ENCODE measurements at regions of chr2 and their contacts with region 1.

Region 1: GRCh38 chr2:206154197-206154596 is 5.0 kb downstream of the NDUFS1 start:
- H3K4me3 Mint-ChIP-seq: no peak overlapping the region
- H3K27ac Mint-ChIP-seq: no peak overlapping the region
- H3K4me1 Mint-ChIP-seq: peaks cover 38% of the 10 kb centered on the region
- H3K27me3 Mint-ChIP-seq: no peaks in the 10 kb centered on the region

Region 2: GRCh38 chr2:206023183-206023582 is 131.0 kb before region 1 on chr2:
- intact Hi-C with region 1: loop called (anchors 5 kb)
- H3K4me3 Mint-ChIP-seq: no peak overlapping the region
- H3K27ac Mint-ChIP-seq: no peak overlapping the region
- H3K4me1 Mint-ChIP-seq: no peaks in the 10 kb centered on the region
- H3K27me3 Mint-ChIP-seq: no peaks in the 10 kb centered on the region

Region 3: GRCh38 chr2:206064077-206064476 is 90.1 kb before region 1 on chr2:
- intact Hi-C with region 1: no loop called
- H3K4me3 Mint-ChIP-seq: no peak overlapping the region
- H3K27ac Mint-ChIP-seq: no peak overlapping the region
- H3K4me1 Mint-ChIP-seq: peaks cover 11% of the 10 kb centered on the region
- H3K27me3 Mint-ChIP-seq: no peaks in the 10 kb centered on the region

Region 4: GRCh38 chr2:206305523-206306245 is 151.5 kb after region 1 on chr2:
- intact Hi-C with region 1: no loop called
- H3K4me3 Mint-ChIP-seq: no peak overlapping the region
- H3K27ac Mint-ChIP-seq: no peak overlapping the region
- H3K4me1 Mint-ChIP-seq: no peaks in the 10 kb centered on the region
- H3K27me3 Mint-ChIP-seq: no peaks in the 10 kb centered on the region